WTC11 (cell line): ENCODE measurements at regions of chr5 and their contacts with region 1.

Region 1: DNA sequence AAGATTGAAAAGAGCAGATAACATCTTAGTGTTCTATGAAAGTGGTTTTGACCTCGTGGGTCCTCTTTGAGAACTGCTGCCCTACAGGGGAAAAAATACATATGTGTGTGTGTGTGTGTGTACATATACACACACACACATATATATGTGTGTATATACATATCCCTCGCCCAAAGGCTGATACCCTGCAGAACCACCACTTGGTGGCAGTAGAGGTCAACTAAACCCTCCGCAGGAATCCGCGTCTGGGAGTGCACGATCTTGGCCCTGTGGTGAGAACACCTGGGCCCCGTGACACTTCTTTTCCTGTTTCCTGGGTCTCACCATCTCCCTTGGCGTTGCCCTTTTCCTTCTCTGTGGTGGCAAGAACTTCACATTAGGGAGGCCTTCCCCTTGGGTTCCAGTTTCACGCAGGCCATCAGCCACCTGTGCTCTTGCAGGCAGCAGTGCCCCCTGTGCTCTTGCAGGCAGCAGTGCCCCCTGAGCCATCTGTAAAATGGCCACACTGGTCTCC is 8.2 kb downstream of the IL9 start:
- DNase-seq: peak; percentile 76
- ATAC-seq: peak; percentile 71
- H3K4me3 Mint-ChIP-seq: peak overlapping the region; percentile 58
- H3K27ac Mint-ChIP-seq: no peak overlapping the region
- H3K4me1 Mint-ChIP-seq: peaks cover 20% of the 10 kb centered on the region
- H3K27me3 Mint-ChIP-seq: peaks cover 26% of the 10 kb centered on the region
- CTCF ChIP-seq: peak; percentile 78

Region 2: DNA sequence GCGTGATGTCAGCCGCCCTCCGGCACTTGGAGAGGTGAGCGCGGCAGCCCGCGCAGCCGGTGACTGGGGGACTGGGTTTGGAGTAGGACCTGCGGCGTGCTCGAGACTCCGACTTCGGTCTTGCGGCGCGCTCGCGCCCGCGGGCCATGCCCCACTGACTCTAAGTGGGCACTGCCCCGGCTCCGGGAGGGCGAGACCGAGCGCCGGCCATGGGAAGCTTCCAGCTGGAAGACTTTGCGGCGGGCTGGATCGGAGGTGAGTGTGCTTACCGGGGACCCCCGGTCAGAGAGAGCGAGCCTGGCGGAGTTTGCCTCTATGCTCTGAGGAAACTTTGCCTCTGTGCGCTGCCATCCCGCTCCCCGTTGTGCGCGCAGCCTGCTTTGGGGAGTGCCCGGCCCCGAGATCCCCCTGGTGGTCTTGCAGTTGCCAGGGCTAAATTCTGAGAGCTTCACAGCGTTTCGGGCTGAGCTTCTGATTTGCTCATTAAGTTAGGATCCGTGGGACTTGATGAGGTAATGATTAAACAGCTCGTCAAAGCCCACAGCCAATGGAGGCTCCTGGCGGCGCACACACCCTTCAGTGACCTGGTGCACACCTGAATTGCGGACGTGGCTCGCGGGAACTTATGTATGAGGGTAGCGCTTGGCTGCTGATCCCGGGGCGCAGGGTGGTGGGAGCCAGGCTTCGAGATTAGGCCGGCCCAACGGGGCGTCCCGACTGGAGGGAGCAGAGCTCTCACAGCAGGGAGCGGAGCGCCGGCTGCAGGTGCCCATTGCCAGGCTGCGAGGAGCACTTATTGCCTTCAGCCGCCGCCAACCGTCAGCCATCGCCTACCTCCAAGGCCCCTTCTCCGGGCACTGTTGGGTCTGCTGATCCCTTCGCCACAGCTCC is 52.5 kb before region 1 on chr5 and contains the start of gene SLC25A48:
- CTCF ChIA-PET with region 1: interaction called, 12 read pairs
- POLR2A ChIA-PET with region 1: no interaction called
- DNase-seq: peak; percentile 87
- ATAC-seq: peak; percentile 93
- H3K4me3 Mint-ChIP-seq: peak within 1 kb of the TSS; percentile 84
- H3K27ac Mint-ChIP-seq: no peak within 1 kb of the TSS
- H3K4me1 Mint-ChIP-seq: 0 out of 2 replicates have a peak, but pooled peaks cover 2% of the 10 kb centered on the region
- H3K27me3 Mint-ChIP-seq: peaks cover 89% of the 10 kb centered on the region
- CTCF ChIP-seq: 0 out of 2 replicates have a peak, but pooled peaks have one; percentile 9
- total RNA-seq, gene SLC25A48: 0.76 to 1.1 TPM (median 1.1 TPM) in 3 replicates

Region 3: DNA sequence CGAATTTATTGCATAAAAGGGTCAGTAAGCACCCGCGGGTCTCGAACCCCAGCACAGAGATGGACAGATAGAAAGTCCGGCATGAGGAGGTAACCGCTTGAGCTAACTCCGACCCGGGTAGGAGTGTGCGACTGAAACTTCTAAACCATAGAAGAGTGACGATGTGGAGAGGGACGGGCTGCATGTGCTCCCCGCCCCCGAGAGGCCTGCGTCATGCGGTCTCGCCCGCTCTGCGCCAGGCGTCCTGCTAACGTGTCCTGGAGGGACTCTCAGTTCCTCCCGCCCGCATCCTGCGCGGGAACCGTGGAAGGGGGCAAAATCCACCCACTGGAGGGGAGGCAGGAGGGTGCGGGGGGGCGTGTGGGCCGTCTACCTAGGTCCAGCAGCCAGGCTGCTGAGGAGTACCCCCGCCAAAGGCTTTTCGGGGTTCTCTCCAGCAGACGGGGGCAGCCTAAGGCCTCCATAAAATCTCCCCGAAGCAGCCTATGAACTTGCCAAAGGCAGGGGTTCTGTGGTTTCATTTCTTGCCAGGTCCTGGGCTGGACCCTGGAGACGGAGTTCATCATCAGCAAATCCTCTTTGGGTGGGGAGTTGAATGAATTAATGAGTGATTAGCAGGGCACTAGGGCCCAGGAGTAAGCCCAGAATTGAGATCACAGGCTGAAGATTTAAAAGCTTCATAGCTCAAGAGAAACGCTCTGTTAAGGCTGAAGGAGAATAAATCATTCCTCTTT is 193.2 kb after region 1 on chr5:
- CTCF ChIA-PET with region 1: interaction called, 13 read pairs
- POLR2A ChIA-PET with region 1: no interaction called
- DNase-seq: peak; percentile 86
- ATAC-seq: peak; percentile 70
- H3K4me3 Mint-ChIP-seq: peak overlapping the region; percentile 85
- H3K27ac Mint-ChIP-seq: no peak overlapping the region; the same call in 1 of the 2 replicates
- H3K4me1 Mint-ChIP-seq: peaks cover 2% of the 10 kb centered on the region
- H3K27me3 Mint-ChIP-seq: peaks cover 27% of the 10 kb centered on the region
- CTCF ChIP-seq: no peak